Aorta (tissue), 5 donors: ENCODE measurements at regions of chr14 and their contacts with region 1.

Region 1: GRCh38 chr14:20970983-20971704 is 15.9 kb downstream of the RNASE2 start:
- DNase-seq: peak; percentile 92 to 95
- ATAC-seq: peak; percentile 98
- H3K4me3 ChIP-seq: peak overlapping the region; percentile 16 to 48
- H3K27ac ChIP-seq: peak overlapping the region in 1 of 2 donors; percentile 78
- H3K4me1 ChIP-seq: peaks cover 0 to 2% of the 10 kb centered on the region in 2 donors
- H3K27me3 ChIP-seq: no peaks in the 10 kb centered on the region

Region 2: GRCh38 chr14:20690848-20691523 is 280.2 kb before region 1 on chr14:
- intact Hi-C with region 1: loop called in 1 of 2 experiments (anchors 10 kb)
- DNase-seq: no peak
- ATAC-seq: peak; percentile 88
- H3K4me3 ChIP-seq: no peak overlapping the region
- H3K27ac ChIP-seq: no peak overlapping the region
- H3K4me1 ChIP-seq: peaks cover 0 to 1% of the 10 kb centered on the region in 2 donors
- H3K27me3 ChIP-seq: no peaks in the 10 kb centered on the region

Region 3: DNA sequence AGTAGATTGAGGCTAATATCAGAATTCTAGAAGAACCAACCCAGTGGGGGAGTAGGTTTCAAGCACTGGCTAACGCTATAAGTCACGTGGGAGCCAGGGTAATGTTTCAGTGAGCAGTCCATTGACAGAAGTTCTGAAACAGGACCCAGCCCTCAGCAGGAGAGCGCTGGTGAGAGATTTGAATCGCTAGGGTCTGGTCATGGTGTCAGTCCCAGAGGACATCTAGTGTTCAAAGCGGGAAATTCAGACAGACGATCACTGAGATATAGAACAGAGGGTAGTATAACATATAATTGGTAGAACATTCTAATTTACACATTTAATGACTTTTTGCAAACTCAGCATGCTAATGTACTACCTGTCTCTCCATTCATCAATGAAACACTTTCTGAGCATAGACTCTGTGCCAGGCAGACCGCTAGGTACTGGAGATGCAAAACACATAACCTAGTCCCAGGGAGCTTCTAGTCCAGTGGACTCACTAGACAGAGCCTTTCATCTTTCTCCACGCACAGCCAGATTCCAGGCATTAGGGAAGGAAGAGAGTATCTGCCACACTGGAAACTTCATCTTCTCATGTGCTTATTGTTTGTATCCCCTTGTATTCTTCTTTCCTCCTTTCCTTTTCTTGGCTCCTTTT is 115.4 kb before region 1 on chr14:
- intact Hi-C with region 1: loop called (anchors 2 to 5 kb)
- DNase-seq: peak in 1 of 2 donors; percentile 58
- ATAC-seq: peak; percentile 83
- H3K4me3 ChIP-seq: no peak overlapping the region
- H3K27ac ChIP-seq: no peak overlapping the region
- H3K4me1 ChIP-seq: no peaks in the 10 kb centered on the region
- H3K27me3 ChIP-seq: no peaks in the 10 kb centered on the region

Region 4: DNA sequence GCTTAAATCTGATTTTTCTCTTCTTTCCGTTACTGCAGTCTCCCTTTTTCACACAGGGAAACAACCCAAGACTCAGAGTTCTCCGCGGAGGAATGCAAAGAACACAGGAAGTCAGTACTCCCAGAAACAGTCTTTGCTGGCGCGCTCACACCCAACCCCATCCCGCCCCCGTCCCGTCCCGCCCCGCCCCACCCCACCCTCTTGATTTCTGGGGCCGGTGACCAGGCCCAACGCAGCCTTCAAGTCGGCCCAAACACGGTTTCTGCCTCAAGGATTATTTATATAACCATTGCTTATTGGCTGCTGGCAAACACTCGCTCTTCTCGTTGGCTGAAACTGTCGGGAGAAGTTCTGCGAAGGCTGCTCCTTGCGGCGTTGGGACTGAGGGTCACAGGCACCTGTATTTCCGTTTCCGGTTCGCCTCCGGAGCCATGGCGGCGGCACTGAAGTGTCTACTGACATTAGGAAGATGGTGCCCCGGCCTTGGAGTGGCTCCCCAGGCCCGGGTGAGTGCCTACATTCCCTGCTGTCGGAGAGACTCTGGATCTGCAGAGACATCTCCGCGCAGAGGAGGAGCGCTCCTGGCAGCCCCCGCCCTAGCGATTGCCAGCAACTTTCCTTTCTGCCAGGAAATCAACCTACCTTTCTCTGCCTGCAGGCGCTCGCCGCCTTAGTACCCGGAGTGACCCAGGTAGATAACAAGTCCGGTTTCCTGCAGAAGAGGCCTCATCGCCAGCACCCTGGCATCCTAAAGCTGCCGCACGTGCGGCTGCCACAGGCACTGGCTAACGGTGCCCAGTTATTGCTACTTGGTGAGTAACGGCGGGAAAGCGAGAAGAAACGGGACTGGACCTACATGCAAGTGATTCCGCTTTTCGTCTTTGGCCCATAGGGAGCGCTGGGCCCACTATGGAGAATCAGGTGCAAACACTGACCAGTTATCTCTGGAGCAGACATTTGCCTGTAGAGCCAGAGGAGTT is 18.7 kb after region 1 on chr14 and contains the start of gene METTL17:
- intact Hi-C with region 1: loop called in 1 of 2 experiments (anchors 2 kb)
- DNase-seq: peak; percentile 94 to 95
- ATAC-seq: peak; percentile 94
- H3K4me3 ChIP-seq: peak within 1 kb of the TSS; percentile 85 to 89
- H3K27ac ChIP-seq: peak within 1 kb of the TSS; percentile 91 to 99
- H3K4me1 ChIP-seq: peaks cover 3 to 10% of the 10 kb centered on the region in 2 donors
- H3K27me3 ChIP-seq: no peaks in the 10 kb centered on the region
- total RNA-seq, gene METTL17: 33.5 to 57.0 TPM

Region 5: DNA sequence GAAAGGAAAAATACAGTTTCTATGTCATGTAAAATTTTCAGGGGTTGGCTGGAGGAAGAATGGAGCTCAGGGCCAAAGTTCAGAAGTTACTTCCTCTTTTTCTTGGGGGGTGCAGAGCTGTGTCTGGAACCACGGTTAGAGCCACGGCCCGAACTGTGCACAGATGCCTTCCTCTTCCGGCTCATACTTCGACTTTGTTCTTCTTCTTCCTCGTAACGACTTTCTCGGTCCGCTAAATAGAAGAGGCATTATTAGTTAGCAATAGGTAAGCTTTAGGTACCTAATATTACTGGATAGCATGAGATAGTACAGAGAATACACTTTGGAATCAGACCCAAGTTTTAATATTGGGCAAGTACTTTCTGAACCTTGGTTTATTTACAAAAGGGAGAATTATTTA is 381.4 kb after region 1 on chr14:
- intact Hi-C with region 1: no loop called
- DNase-seq: no peak
- ATAC-seq: no peak
- H3K4me3 ChIP-seq: no peak overlapping the region
- H3K27ac ChIP-seq: no peak overlapping the region
- H3K4me1 ChIP-seq: no peaks in the 10 kb centered on the region
- H3K27me3 ChIP-seq: no peaks in the 10 kb centered on the region